ENCODE measurements at regions of chr3 and their contacts with region 1.

Region 1: GRCh38 chr3:157201648-157202278 is 41.8 kb upstream of the CCNL1 start:
- DNase-seq: peak; percentile 28
- H3K4me3 ChIP-seq: no peak overlapping the region
- H3K27ac ChIP-seq: no peak overlapping the region
- H3K4me1 ChIP-seq: no peaks in the 10 kb centered on the region
- H3K27me3 ChIP-seq: no peaks in the 10 kb centered on the region
- CTCF ChIP-seq: peak; percentile 49 to 58

Region 2: DNA sequence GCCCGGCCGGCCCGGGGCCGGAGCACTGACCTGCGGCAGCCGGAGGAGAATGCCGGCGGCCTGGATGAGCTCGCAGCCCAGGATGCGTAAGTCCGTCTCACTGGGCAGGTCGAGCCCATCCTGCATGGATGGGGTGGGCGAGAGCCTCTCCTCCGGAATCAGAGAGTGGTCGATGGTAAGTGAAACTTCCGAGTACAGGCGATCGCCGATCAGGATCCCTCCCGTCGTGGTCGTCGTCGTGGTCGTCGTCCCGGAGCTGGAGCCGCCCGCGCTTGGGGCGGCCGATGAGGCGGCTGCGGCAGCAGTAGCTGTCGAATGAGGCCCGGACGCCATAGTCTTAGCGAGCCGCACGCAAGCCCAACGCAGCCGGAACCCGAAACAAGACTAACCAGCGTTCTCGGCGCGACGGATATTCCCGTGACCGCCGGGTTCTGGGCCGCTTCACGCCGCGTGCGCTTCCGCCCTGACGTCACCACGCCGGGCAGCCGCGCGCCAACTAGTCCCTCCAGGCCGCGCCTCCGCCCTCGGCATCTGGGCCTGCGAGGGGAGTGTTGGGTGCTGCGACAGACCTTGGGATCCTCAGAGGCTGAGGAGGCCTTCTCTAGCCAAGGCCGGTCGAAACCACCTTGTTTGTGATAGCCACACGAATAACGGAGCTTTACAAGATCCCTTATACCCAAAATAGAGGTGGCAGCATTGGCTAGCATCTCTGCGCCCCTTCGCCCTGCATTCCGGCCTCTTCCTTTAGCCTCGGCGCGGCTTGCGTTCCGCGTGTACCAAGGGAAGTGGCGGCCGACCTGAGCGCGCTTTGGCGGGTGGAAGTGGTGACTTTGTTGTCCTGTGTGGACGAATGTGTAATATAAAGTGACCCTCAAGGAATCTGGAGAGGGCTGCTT is 41.8 kb before region 1 on chr3 and contains the start of gene CCNL1:
- CTCF ChIA-PET with region 1: no interaction called
- dilution Hi-C with region 1: no loop called
- in situ Hi-C with region 1: no loop called
- intact Hi-C with region 1: loop called (anchors 1 kb)
- DNase-seq: peak; percentile 97
- H3K4me3 ChIP-seq: peak within 1 kb of the TSS; percentile 56 to 98 (median 96)
- H3K27ac ChIP-seq: peak within 1 kb of the TSS; percentile 98
- H3K4me1 ChIP-seq: peaks cover 23% of the 10 kb centered on the region
- H3K27me3 ChIP-seq: no peaks in the 10 kb centered on the region
- CTCF ChIP-seq: no peak
- total RNA-seq, gene CCNL1: 127 to 130 TPM

Region 3: DNA sequence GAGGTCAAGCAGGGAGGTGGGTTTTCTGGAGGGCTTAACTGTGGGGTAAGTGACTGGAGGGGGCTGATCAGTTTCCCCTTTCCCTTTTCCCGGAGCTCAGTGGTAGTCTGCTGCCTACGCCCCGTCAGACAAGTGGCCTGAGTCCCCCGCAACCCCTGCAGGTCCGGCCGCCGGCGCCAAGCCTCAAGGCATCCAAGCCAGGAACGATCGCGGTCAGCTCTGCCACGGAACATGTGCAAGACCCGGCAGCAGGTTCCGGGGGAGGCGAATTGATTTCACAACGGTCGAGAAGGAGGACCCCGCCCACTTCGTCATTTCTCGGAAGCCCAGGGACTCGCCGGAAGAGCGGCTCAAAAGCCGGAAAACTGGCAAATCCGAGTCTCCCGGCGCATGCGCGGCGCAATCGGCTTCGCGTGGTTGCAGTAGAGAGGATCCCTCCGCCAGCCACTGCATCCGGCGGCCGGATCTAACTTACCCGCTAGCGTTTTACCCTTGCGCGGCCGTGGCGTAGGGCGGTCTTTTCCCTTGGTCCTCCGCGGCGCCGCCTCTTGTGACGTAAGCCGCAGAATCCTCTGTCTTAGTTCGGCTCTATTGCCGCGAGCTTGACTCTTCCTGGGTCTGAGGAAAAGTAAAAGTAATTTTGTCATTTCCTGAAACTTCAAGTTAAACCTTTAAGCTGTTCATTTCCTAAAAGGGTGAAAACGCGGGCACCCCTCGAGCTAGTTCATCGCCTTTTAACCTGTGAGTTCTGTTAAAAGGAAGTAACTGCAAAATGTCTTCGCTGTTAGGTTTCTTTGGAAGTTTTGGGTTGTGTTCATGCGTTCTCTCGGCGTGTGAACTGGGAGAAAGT is 26.9 kb before region 1 on chr3:
- CTCF ChIA-PET with region 1: no interaction called
- dilution Hi-C with region 1: no loop called
- in situ Hi-C with region 1: no loop called
- intact Hi-C with region 1: loop called (anchors 1 kb)
- DNase-seq: peak; percentile 99
- H3K4me3 ChIP-seq: peak overlapping the region; percentile 67 to 99 (median 97)
- H3K27ac ChIP-seq: peak overlapping the region; percentile 97
- H3K4me1 ChIP-seq: peaks cover 13% of the 10 kb centered on the region
- H3K27me3 ChIP-seq: peaks cover 1% of the 10 kb centered on the region
- CTCF ChIP-seq: no peak

Region 4: DNA sequence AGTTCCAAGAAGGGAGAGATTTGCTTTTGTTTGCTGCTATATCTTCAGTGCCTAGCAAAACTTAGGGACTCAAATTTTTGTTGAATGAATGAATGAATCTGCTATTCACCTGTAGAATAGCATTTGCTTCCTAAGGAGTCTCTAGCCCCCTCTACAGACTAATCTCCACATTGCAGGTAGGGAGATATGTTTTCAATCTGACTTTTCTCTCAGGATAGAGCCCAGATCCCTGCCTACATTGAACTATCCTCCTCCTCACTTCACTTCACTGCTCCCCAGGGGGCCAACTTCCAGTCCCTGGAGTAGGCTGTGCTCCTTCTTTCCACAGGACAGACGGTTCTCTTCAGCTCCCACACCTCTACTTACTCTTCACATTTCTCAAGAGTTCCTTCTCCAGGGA is 153.0 kb after region 1 on chr3:
- CTCF ChIA-PET with region 1: no interaction called
- dilution Hi-C with region 1: no loop called
- in situ Hi-C with region 1: no loop called
- intact Hi-C with region 1: loop called (anchors 1 kb)
- DNase-seq: no peak
- H3K4me3 ChIP-seq: no peak overlapping the region
- H3K27ac ChIP-seq: no peak overlapping the region
- H3K4me1 ChIP-seq: no peaks in the 10 kb centered on the region
- H3K27me3 ChIP-seq: no peaks in the 10 kb centered on the region
- CTCF ChIP-seq: peak; percentile 42 to 57

Region 5: GRCh38 chr3:157447026-157447694 is 245.4 kb after region 1 on chr3:
- CTCF ChIA-PET with region 1: interaction called, 8 read pairs
- dilution Hi-C with region 1: no loop called
- in situ Hi-C with region 1: no loop called
- intact Hi-C with region 1: loop called (anchors 1 kb)
- DNase-seq: peak; percentile 17
- H3K4me3 ChIP-seq: no peak overlapping the region
- H3K27ac ChIP-seq: no peak overlapping the region
- H3K4me1 ChIP-seq: no peaks in the 10 kb centered on the region
- H3K27me3 ChIP-seq: peaks cover 2% of the 10 kb centered on the region
- CTCF ChIP-seq: peak; percentile 48 to 70

Region 6: GRCh38 chr3:157493627-157494550 is 292.1 kb after region 1 on chr3:
- CTCF ChIA-PET with region 1: no interaction called
- dilution Hi-C with region 1: no loop called
- in situ Hi-C with region 1: loop called (anchors 5 to 10 kb)
- intact Hi-C with region 1: loop called (anchors 1 kb)
- DNase-seq: peak; percentile 30
- H3K4me3 ChIP-seq: no peak overlapping the region
- H3K27ac ChIP-seq: no peak overlapping the region
- H3K4me1 ChIP-seq: peaks cover 3% of the 10 kb centered on the region
- H3K27me3 ChIP-seq: no peaks in the 10 kb centered on the region
- CTCF ChIP-seq: peak; percentile 65 to 66

Region 7: GRCh38 chr3:157572559-157573270 is 371.0 kb after region 1 on chr3:
- CTCF ChIA-PET with region 1: interaction called, 6 read pairs
- dilution Hi-C with region 1: no loop called
- in situ Hi-C with region 1: no loop called
- intact Hi-C with region 1: loop called (anchors 1 kb)
- DNase-seq: peak; percentile 32
- H3K4me3 ChIP-seq: no peak overlapping the region
- H3K27ac ChIP-seq: no peak overlapping the region
- H3K4me1 ChIP-seq: no peaks in the 10 kb centered on the region
- H3K27me3 ChIP-seq: no peaks in the 10 kb centered on the region
- CTCF ChIP-seq: peak; percentile 76 to 80

Measured in mammary epithelial cell (primary cell).